Mammary epithelial cell (primary cell): ENCODE measurements at regions of chr16 and their contacts with region 1.

Region 1: GRCh38 chr16:68902008-68902968 is 59.0 kb downstream of the TANGO6 start:
- DNase-seq: peak; percentile 66
- H3K4me3 ChIP-seq: no peak overlapping the region
- H3K27ac ChIP-seq: no peak overlapping the region
- H3K4me1 ChIP-seq: peaks cover 7% of the 10 kb centered on the region
- H3K27me3 ChIP-seq: no peaks in the 10 kb centered on the region
- CTCF ChIP-seq: peak; percentile 73 to 85

Region 2: GRCh38 chr16:68528686-68529379 is 373.5 kb before region 1 on chr16:
- CTCF ChIA-PET with region 1: no interaction called
- dilution Hi-C with region 1: no loop called
- in situ Hi-C with region 1: no loop called
- intact Hi-C with region 1: loop called (anchors 2 kb)
- DNase-seq: peak; percentile 72
- H3K4me3 ChIP-seq: peak overlapping the region; percentile 5 to 32 (median 30)
- H3K27ac ChIP-seq: no peak overlapping the region
- H3K4me1 ChIP-seq: peaks cover 19% of the 10 kb centered on the region
- H3K27me3 ChIP-seq: no peaks in the 10 kb centered on the region
- CTCF ChIP-seq: peak; percentile 82 to 91

Region 3: DNA sequence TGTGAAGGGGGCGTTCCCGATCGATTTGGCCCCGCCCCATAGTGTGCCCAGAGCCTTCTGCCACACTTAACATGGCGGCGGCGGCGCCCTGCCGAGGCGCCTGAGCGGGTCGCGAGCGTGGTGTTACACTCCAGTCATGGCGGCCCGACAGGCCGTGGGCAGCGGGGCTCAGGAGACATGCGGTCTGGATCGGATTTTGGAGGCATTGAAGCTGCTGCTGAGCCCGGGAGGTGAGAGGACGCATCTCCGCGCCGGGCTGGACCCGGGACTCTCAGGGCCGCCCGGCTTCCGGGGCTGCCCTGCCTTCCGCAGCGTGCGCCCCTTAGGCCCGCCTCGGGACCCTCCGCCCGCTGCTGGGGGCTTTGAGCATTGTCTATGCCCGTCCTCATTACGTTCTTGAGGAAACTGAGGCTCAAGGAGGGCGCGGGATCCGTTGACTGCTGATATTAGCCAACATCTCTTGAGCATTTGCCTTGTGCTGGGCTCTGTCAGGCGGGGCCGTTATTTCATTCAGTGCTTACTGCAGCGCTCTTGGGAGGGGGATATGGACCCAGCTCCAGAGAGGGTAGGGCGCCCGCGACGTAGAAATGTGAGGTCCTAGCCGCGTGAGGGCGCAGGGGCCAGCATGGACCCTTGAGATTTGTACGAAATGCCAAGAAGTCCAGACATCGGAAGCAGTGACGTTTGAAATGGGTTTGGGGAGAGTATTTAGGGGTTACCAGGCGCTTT is 58.6 kb before region 1 on chr16 and contains the start of gene TANGO6:
- CTCF ChIA-PET with region 1: no interaction called
- dilution Hi-C with region 1: no loop called
- in situ Hi-C with region 1: no loop called
- intact Hi-C with region 1: loop called (anchors 1 kb)
- DNase-seq: peak; percentile 64
- H3K4me3 ChIP-seq: peak within 1 kb of the TSS; percentile 71 to 75 (median 73)
- H3K27ac ChIP-seq: peak within 1 kb of the TSS; percentile 52
- H3K4me1 ChIP-seq: peaks cover 4% of the 10 kb centered on the region
- H3K27me3 ChIP-seq: no peaks in the 10 kb centered on the region
- CTCF ChIP-seq: peak in 1 of 2 donors; percentile 20
- total RNA-seq, gene TANGO6: 18.2 to 24.5 TPM

Region 4: GRCh38 chr16:68978271-68978954 is 76.1 kb after region 1 on chr16:
- CTCF ChIA-PET with region 1: no interaction called
- dilution Hi-C with region 1: loop called (anchors 5 kb)
- in situ Hi-C with region 1: no loop called
- intact Hi-C with region 1: no loop called
- DNase-seq: no peak
- H3K4me3 ChIP-seq: no peak overlapping the region
- H3K27ac ChIP-seq: no peak overlapping the region
- H3K4me1 ChIP-seq: no peaks in the 10 kb centered on the region
- H3K27me3 ChIP-seq: no peaks in the 10 kb centered on the region
- CTCF ChIP-seq: no peak

Region 5: GRCh38 chr16:69089091-69089910 is 187.0 kb after region 1 on chr16:
- CTCF ChIA-PET with region 1: no interaction called
- dilution Hi-C with region 1: loop called (anchors 5 kb)
- in situ Hi-C with region 1: no loop called
- intact Hi-C with region 1: no loop called
- DNase-seq: no peak
- H3K4me3 ChIP-seq: no peak overlapping the region
- H3K27ac ChIP-seq: no peak overlapping the region
- H3K4me1 ChIP-seq: no peaks in the 10 kb centered on the region
- H3K27me3 ChIP-seq: no peaks in the 10 kb centered on the region
- CTCF ChIP-seq: no peak

Region 6: GRCh38 chr16:69112285-69113129 is 210.2 kb after region 1 on chr16:
- CTCF ChIA-PET with region 1: interaction called, 5 read pairs
- dilution Hi-C with region 1: no loop called
- in situ Hi-C with region 1: loop called (anchors 5 kb)
- intact Hi-C with region 1: no loop called
- DNase-seq: no peak
- H3K4me3 ChIP-seq: no peak overlapping the region
- H3K27ac ChIP-seq: no peak overlapping the region
- H3K4me1 ChIP-seq: peaks cover 29% of the 10 kb centered on the region
- H3K27me3 ChIP-seq: no peaks in the 10 kb centered on the region
- CTCF ChIP-seq: peak; percentile 62 to 79

Region 7: DNA sequence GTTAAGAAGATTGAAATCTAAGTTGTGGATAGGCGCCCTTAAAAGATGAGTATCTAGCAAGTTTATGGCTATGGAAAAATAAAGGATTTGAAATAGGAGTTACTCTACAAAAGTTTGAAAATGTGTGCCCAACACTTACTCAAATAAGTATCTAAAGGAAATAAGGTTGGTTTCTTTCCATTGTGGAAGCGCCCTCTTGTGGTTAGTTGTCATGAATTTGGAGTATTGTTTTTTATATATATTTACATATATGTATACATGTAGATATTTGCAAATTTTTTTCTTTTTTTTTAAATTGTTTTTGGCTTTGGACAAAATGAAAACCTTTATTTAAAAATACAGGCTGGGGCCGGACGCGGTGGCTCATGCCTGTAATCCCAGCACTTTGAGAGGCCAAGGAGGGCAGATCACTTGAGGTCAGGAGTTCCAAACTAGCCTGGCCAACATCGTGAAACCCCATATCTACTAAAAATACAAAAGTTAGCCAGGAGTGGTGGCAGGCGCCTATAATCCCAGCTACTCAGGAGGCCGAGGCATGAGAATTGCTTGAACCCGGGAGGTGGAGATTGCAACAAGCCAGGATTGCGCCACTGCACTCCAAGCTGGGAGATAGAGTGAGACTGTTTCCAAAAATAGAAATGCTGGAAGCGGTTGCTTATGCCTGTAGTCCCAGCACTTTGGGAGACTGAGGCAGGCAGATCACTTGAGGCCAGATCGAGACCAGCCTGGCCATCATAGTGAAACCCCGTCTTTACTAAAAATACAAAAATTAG is 384.8 kb after region 1 on chr16:
- CTCF ChIA-PET with region 1: no interaction called
- dilution Hi-C with region 1: no loop called
- in situ Hi-C with region 1: no loop called
- intact Hi-C with region 1: loop called (anchors 2 kb)
- DNase-seq: peak; percentile 31
- H3K4me3 ChIP-seq: no peak overlapping the region
- H3K27ac ChIP-seq: no peak overlapping the region
- H3K4me1 ChIP-seq: no peaks in the 10 kb centered on the region
- H3K27me3 ChIP-seq: no peaks in the 10 kb centered on the region
- CTCF ChIP-seq: peak; percentile 49